ENCODE measurements at regions of chr5 and their contacts with region 1.

Region 1: GRCh38 chr5:96702503-96703383 is 40.6 kb downstream of the CAST start:
- DNase-seq: peak; percentile 89
- H3K4me3 Mint-ChIP-seq: peak overlapping the region; percentile 87
- H3K27ac Mint-ChIP-seq: peak overlapping the region; percentile 88
- H3K4me1 Mint-ChIP-seq: peaks cover 47% of the 10 kb centered on the region
- H3K27me3 Mint-ChIP-seq: no peaks in the 10 kb centered on the region

Region 2: DNA sequence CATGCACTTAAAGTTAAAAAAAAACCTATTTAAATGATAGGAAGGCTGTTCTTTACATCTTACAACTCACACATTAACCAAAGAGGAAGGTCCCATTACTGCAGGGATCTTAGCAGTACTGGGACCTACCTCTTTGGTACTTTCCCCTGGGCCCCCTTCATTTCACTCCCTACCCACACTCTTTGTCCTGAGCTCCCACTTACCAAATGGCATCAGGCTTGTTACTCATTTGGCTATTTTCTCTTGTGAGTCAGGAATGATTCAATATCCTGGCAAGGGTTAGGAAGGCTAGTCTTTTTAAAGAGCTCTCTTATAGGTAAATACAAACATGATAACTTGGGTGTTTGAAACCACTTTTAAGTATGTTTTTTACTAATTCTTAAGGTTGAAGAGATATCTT is 623.7 kb before region 1 on chr5:
- CTCF ChIA-PET with region 1: no interaction called
- intact Hi-C with region 1: loop called (anchors 5 kb)
- DNase-seq: peak; percentile 71
- H3K4me3 Mint-ChIP-seq: no peak overlapping the region
- H3K27ac Mint-ChIP-seq: peak overlapping the region; percentile 77
- H3K4me1 Mint-ChIP-seq: peaks cover 38% of the 10 kb centered on the region
- H3K27me3 Mint-ChIP-seq: peaks cover 9% of the 10 kb centered on the region

Region 3: DNA sequence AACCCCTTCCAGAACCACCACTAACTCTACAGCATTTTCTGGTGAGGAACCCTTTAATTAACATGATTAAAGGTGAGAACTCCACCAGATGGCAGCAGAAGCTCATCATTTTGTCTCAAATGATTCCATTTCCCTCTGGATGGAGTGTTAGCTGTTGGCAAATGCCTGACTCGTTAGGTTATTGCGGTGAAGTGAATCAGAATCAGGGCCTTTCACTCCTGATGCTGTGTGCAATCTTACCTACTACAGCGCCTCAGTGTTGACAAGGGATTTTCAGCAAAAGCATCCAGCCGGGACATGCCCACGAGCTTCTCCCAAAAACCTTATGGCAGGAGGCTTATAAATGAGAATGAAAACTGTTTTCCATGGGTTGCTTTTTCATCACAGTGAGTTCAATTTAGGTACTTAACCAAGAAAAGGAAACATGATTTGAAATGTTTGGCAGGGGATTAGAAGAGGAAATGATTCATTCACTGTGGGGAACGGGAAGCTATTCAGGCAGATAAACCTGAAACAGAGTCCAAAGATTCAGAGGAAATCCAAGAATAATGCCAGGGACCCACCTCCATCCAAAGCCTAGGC is 88.5 kb before region 1 on chr5:
- CTCF ChIA-PET with region 1: interaction called, 5 read pairs
- intact Hi-C with region 1: loop called (anchors 1 kb)
- DNase-seq: peak; percentile 65
- H3K4me3 Mint-ChIP-seq: no peak overlapping the region
- H3K27ac Mint-ChIP-seq: no peak overlapping the region
- H3K4me1 Mint-ChIP-seq: peaks cover 4% of the 10 kb centered on the region
- H3K27me3 Mint-ChIP-seq: peaks cover 5% of the 10 kb centered on the region

Region 4: GRCh38 chr5:96816411-96816939 is 113.7 kb after region 1 on chr5:
- CTCF ChIA-PET with region 1: no interaction called
- intact Hi-C with region 1: loop called (anchors 2 kb)
- DNase-seq: peak; percentile 84
- H3K4me3 Mint-ChIP-seq: peak overlapping the region; percentile 71
- H3K27ac Mint-ChIP-seq: peak overlapping the region; percentile 91
- H3K4me1 Mint-ChIP-seq: peaks cover 80% of the 10 kb centered on the region
- H3K27me3 Mint-ChIP-seq: no peaks in the 10 kb centered on the region

Region 5: GRCh38 chr5:97094579-97095317 is 392.0 kb after region 1 on chr5:
- CTCF ChIA-PET with region 1: no interaction called
- intact Hi-C with region 1: loop called (anchors 1 kb)
- DNase-seq: peak; percentile 68
- H3K4me3 Mint-ChIP-seq: no peak overlapping the region
- H3K27ac Mint-ChIP-seq: no peak overlapping the region
- H3K4me1 Mint-ChIP-seq: peaks cover 16% of the 10 kb centered on the region
- H3K27me3 Mint-ChIP-seq: peaks cover 6% of the 10 kb centered on the region

Measured in activated naive CD4-positive, alpha-beta T cell treated with anti-CD3 and anti-CD28 coated beads for 36 hours (primary cell).